ENCODE measurements at regions of chr19 and their contacts with region 1.

Region 1: DNA sequence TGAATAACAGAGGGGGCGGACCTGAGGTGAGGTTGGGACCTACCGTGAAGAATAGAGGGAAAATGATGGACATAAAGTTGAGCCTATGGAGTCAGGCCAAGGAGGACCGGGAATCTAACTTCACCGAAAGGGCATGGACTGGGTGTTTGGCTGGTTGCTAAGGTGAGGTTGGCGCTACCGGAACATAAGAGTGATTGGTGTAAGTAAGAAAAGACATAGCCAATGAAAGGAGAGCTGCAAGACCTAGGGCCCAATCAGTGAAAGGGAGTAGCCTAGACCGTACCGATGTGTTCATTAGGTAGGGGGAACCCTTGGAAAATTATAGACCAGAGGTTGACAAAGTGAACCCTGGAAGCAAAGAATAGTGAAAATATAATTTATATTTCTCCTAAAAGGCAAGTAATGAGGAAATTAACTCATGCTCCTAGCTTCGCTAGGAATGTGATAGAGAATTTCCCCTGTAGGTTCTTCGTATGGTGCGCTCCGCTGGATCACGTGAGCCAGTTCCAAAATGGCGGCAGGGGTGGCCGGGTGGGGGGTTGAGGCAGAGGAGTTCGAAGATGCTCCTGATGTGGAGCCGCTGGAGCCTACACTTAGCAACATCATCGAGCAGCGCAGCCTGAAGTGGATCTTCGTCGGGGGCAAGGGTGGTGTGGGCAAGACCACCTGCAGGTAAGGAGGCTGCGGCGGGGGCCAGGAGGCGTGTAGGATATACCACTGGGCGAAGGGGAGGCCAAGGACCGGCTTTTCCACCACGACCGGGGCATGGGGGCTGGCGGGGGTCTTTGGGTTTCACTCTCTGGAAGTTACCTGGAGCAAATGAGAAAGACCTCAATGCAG is at the start of gene GET3:
- DNase-seq: peak; percentile 75
- H3K4me3 Mint-ChIP-seq: peak within 1 kb of the TSS; percentile 99
- H3K27ac Mint-ChIP-seq: peak within 1 kb of the TSS; percentile 83
- H3K4me1 Mint-ChIP-seq: peaks cover 28% of the 10 kb centered on the region
- H3K27me3 Mint-ChIP-seq: no peaks in the 10 kb centered on the region
- total RNA-seq, gene GET3: 68.0 and 70.9 TPM in 2 replicates

Region 2: DNA sequence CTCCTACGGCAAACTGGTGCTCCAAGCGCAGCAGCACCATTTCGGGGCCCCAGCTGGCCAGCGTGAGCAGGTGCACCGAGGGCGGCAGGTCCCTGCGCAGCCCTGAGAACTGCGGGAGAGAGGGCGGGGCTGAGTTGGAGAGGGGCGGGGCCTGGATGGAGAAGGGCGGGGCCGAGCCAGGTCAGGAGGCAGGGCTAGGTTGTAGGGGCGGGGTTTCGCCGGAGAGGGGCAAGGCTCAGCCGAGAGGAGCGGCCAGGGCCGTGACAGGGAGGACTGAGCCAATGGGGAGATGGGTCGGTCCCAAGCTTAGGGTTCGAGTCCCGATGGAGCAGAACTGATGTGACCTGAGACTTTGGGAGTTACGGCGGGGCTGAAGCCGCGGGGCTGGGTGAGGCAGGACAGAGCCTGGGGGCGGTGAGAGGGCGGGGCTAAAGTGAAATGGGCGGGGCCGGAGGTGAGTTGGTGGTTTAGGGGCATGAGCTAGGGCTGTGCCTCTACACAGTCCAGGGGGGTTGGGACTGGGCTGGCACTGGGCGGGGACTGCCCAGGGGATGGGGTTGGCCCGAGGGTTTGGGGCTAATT is 89.6 kb before region 1 on chr19:
- intact Hi-C with region 1: no loop called
- DNase-seq: no peak
- H3K4me3 Mint-ChIP-seq: no peak overlapping the region
- H3K27ac Mint-ChIP-seq: no peak overlapping the region
- H3K4me1 Mint-ChIP-seq: no peaks in the 10 kb centered on the region
- H3K27me3 Mint-ChIP-seq: no peaks in the 10 kb centered on the region

Region 3: DNA sequence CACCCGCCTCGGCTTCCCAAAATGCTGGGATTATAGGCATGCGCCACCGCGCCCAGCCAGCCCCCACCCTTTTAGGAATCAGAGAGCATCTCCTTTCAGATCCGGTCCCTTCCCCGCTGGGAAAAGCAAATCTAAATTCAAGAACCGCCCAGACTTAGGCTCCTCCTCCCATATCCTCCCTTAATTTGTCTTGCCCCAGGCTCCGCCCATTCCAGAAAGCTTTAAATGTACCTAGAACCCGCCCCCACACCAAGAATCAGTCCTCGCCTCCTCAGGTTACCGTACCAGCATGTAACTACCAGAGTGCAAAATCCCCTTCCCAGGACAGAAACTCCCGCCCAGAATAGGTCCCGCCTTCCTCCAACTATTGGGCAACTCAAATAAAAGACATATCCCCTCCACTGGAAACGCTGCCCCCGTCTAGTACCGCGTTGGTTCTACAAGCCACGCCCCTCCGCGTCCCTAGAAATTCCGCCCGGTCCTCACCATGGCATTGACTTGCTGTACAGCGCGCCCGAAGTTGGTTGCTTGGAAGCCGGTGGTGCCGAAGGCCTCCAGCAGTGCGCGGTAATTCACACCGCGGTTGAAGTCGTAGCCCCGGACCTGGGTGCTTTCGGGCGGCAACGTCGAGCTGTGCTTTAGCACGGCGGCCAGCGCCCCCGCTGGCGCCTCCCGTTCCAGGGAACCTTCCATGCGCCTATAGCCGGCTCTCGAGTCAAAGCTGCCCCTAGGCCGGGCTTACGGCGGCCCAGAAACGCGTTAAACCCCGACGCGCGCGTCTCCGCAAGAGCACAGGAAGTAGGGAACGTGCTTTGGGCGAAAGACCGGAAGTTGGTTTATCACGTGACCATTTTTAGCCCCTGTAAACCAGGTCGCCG is 55.9 kb before region 1 on chr19 and contains the start of gene DHPS:
- intact Hi-C with region 1: loop called (anchors 1 kb)
- DNase-seq: peak; percentile 89
- H3K4me3 Mint-ChIP-seq: peak within 1 kb of the TSS; percentile 86
- H3K27ac Mint-ChIP-seq: peak within 1 kb of the TSS; percentile 88
- H3K4me1 Mint-ChIP-seq: peaks cover 12% of the 10 kb centered on the region
- H3K27me3 Mint-ChIP-seq: no peaks in the 10 kb centered on the region
- total RNA-seq, gene DHPS: 144 and 147 TPM in 2 replicates

Region 4: GRCh38 chr19:12722566-12723380 is 14.4 kb before region 1 on chr19:
- intact Hi-C with region 1: loop called (anchors 1 kb)
- DNase-seq: peak; percentile 91
- H3K4me3 Mint-ChIP-seq: peak overlapping the region; percentile 99
- H3K27ac Mint-ChIP-seq: peak overlapping the region; percentile 98
- H3K4me1 Mint-ChIP-seq: peaks cover 48% of the 10 kb centered on the region
- H3K27me3 Mint-ChIP-seq: no peaks in the 10 kb centered on the region

Region 5: GRCh38 chr19:12789904-12790619 is 52.8 kb after region 1 on chr19:
- intact Hi-C with region 1: loop called (anchors 1 kb)
- DNase-seq: peak; percentile 94
- H3K4me3 Mint-ChIP-seq: peak overlapping the region; percentile 97
- H3K27ac Mint-ChIP-seq: peak overlapping the region; percentile 91
- H3K4me1 Mint-ChIP-seq: peaks cover 30% of the 10 kb centered on the region
- H3K27me3 Mint-ChIP-seq: no peaks in the 10 kb centered on the region

Region 6: GRCh38 chr19:12890787-12891552 is 153.8 kb after region 1 on chr19 and contains the start of gene GCDH:
- intact Hi-C with region 1: loop called (anchors 1 kb)
- DNase-seq: peak; percentile 95
- H3K4me3 Mint-ChIP-seq: peak within 1 kb of the TSS; percentile 97
- H3K27ac Mint-ChIP-seq: peak within 1 kb of the TSS; percentile 88
- H3K4me1 Mint-ChIP-seq: peaks cover 13% of the 10 kb centered on the region
- H3K27me3 Mint-ChIP-seq: no peaks in the 10 kb centered on the region
- total RNA-seq, gene GCDH: 65.9 and 68.8 TPM in 2 replicates

Region 7: GRCh38 chr19:13117772-13118423 is 380.7 kb after region 1 on chr19 and contains the start of gene NACC1:
- intact Hi-C with region 1: loop called (anchors 10 kb)
- DNase-seq: peak; percentile 89
- H3K4me3 Mint-ChIP-seq: peak within 1 kb of the TSS; percentile 96
- H3K27ac Mint-ChIP-seq: peak within 1 kb of the TSS; percentile 97
- H3K4me1 Mint-ChIP-seq: peaks cover 51% of the 10 kb centered on the region
- H3K27me3 Mint-ChIP-seq: no peaks in the 10 kb centered on the region
- total RNA-seq, gene NACC1: 124 TPM in 2 replicates

Measured in activated T-helper 1 cell treated with anti-CD3 and anti-CD28 coated beads, Interleukin-12 subunit alpha, Interleukin-12 subunit beta, Interleukin-2, Interleukin-4 antibody, amounts not matched to agents 30 ng/mL and 10 ng/mL and 1 ng/mL, durations not matched to agents 14 hours and 24 hours and 36 hours (primary cell).